Left colon (tissue), 2 donors: ENCODE measurements at regions of chr4 and their contacts with region 1.

Region 1: DNA sequence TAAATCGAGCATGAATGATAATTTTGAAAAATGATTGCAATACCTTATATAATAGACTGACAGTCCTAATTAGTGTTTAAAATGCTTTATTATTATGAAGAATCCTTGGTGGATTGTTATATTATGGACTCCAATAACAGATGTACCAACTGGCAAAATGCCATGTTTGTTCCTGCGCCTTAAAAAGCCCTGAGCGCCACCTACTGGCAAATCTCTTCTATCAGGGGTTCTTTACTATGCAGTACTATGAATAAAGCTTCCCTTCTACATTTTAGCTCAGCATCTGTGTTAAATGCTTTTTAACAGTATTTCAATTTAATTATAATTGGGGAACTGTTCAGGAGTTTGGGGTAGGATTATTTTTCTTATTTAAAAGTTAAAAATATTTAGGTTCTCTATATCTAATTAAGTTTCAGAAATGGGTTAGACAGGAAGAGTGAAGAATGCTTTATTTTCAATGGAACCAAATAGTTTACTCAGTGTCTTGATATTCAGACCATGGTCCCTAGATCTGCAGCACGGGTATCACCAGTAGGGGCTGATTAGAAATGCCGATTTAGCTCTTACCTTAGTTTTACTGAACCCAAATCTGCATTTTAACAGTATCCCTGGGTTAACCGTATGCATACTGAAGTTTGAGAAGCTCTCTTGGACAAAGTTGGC is 20.1 kb downstream of the CFAP97 start:
- DNase-seq: peak; percentile 74 to 94
- ATAC-seq: peak; percentile 76

Region 2: DNA sequence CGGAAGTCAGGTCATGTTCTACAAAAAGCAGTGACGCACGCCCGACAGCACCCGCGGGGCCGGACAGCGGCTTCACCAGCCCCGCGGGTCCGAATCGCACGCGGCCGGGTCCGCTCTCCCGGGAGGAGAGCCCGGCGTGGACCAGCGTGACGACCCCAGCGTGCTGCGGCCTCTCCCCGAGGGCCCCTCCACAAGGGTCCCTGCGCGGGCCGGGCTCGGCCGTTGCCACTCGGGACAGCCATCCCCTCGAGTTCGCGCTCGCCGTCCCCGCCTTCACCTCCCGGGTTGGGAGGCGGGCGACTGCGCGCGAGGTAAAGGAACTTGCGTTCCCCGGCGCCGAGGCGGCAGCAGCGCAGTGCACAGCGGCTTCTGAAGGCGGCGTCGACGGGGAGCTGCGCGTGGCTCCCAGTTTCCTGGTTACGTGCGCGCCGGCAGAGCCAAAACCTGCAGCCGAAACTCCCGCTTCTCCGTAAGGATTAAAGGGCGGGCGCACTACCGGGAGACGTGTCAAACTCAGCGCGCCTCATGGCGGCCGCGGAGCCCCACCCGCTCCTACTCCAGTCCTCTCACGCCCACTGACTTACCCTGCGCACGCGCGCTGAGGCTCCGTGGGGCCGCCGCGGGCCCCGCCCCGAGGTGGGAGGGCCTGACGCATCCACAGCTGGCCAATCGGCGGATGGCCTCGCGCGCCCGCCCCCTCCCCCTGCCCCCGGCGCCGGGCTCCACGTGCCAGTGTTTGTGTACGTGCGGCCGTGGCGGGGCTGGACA is 212.4 kb after region 1 on chr4:
- intact Hi-C with region 1: loop called in 1 of 2 experiments (anchors 10 kb)
- DNase-seq: peak; percentile 96 to 97
- ATAC-seq: peak; percentile 86